ENCODE measurements at regions of chr6 and their contacts with region 1.

Region 1: GRCh38 chr6:26204332-26205165 is 117.3 kb downstream of the HFE start:
- DNase-seq: peak; percentile 99
- H3K4me3 ChIP-seq: peak overlapping the region; percentile 37 to 93 (median 86)
- H3K27ac ChIP-seq: peak overlapping the region; percentile 96
- H3K4me1 ChIP-seq: peaks cover 28% of the 10 kb centered on the region
- H3K27me3 ChIP-seq: no peaks in the 10 kb centered on the region
- CTCF ChIP-seq: peak; percentile 18 to 31
- POLR2A ChIP-seq: peak; percentile 99

Region 2: DNA sequence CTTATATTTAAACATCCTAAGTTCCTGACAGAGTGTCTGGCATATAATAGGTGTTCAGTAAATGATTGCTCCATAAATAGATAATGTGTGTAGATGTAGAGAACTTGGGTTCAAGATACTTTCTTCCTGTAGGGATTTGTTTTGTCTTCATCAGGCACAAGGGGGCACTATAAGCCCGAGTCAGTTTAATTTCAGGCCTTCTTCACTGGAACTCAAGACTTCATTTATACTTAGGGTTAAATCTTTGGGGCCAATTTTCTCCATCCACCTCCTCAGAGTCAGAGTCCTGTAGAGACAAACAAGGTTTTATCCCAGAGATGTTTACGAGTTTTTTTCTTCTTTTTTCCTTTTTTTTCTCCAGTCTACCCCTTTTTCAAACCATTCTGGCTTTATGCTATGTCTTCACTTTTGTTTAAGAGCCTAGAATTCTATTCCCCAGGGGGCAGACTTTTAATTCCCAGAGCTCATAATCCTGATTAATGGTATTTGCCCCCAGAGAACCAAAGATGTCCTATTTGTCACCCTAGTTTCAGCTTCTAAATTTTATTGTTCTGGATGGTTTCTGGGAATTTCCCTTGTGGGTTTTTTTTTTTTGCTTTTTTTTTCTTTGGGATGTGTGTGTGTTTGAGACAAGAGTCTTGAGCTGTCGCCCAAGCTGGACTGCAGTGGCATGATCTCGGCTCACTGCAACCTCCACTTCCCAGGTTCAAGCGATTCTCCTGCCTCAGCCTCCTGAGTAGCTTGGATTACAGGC is 28.9 kb before region 1 on chr6:
- CTCF ChIA-PET with region 1: interaction called, 5 read pairs
- POLR2A ChIA-PET with region 1: interaction called, 9 read pairs
- dilution Hi-C with region 1: no loop called
- intact Hi-C with region 1: loop called (anchors 1 kb)
- DNase-seq: peak; percentile 85
- H3K4me3 ChIP-seq: no peak overlapping the region
- H3K27ac ChIP-seq: no peak overlapping the region
- H3K4me1 ChIP-seq: peaks cover 11% of the 10 kb centered on the region
- H3K27me3 ChIP-seq: no peaks in the 10 kb centered on the region
- CTCF ChIP-seq: peak; percentile 46 to 51
- POLR2A ChIP-seq: no peak

Region 3: DNA sequence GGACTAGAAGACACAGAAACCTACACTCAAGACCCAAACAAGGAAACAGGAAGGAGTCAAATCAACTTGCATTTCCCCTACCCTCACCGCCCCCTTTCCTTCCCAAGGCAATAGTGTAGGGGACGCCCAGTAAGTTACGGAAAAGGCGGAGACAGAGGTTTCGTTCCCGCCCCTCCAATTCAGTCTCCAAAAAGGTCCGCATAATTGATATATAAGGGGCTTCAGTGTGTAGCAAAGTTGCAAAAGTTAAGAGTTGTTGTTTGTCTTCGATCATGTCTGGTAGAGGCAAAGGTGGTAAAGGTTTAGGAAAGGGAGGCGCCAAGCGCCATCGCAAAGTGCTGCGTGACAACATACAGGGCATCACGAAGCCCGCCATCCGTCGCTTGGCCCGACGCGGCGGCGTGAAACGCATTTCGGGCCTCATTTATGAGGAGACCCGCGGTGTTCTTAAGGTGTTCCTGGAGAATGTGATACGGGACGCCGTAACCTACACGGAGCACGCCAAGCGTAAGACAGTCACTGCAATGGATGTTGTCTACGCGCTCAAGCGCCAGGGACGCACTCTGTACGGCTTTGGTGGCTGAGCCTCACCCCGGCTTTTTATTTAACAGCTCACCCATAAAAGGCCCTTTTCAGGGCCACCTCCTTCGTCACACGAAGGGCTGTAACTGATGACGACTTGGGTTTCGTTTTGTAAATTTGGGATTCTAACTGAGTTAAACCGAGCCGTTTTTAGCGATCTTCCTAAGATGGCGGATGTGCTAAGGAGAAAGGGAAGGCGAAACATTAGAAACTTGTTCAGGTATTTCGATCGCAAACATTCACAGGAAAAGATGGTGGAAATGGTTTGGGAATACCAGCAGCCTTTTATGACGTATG is 35.8 kb after region 1 on chr6:
- CTCF ChIA-PET with region 1: no interaction called
- POLR2A ChIA-PET with region 1: no interaction called
- dilution Hi-C with region 1: no loop called
- intact Hi-C with region 1: loop called (anchors 1 kb)
- DNase-seq: peak; percentile 85
- H3K4me3 ChIP-seq: peak overlapping the region; percentile 40 to 77 (median 66)
- H3K27ac ChIP-seq: peak overlapping the region; percentile 79
- H3K4me1 ChIP-seq: peaks cover 3% of the 10 kb centered on the region
- H3K27me3 ChIP-seq: no peaks in the 10 kb centered on the region
- CTCF ChIP-seq: no peak
- POLR2A ChIP-seq: peak; percentile 98

Region 4: DNA sequence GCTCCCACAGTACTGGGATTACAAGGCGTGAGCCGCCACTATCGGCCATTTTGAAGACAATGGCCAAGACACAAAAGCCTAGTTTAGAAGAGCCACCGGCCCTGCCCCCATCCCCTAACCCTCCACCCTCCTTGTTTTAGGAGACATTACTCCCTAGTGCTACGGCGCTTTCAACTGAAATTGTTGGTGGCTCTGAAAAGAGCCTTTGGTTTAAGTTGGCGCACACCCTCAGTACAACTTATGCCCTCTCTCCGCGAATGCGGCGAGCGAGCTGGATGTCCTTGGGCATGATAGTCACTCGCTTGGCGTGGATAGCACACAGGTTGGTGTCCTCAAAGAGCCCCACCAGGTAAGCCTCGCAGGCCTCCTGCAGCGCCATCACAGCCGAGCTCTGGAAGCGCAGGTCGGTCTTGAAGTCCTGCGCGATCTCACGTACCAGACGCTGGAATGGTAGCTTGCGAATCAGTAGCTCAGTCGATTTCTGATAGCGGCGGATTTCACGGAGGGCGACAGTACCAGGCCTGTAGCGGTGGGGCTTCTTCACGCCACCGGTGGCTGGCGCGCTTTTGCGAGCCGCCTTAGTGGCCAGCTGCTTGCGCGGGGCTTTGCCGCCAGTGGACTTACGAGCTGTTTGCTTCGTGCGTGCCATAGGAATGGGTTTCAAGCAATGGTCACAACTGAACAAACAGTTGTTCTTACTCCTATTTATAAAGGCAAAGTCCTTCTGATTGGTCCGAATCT is 45.6 kb after region 1 on chr6:
- CTCF ChIA-PET with region 1: no interaction called
- POLR2A ChIA-PET with region 1: interaction called, 9 read pairs
- dilution Hi-C with region 1: no loop called
- intact Hi-C with region 1: loop called (anchors 1 kb)
- DNase-seq: peak; percentile 87
- H3K4me3 ChIP-seq: peak overlapping the region; percentile 27 to 85 (median 49)
- H3K27ac ChIP-seq: peak overlapping the region; percentile 67
- H3K4me1 ChIP-seq: peaks cover 3% of the 10 kb centered on the region
- H3K27me3 ChIP-seq: no peaks in the 10 kb centered on the region
- CTCF ChIP-seq: peak; percentile 28 to 52
- POLR2A ChIP-seq: peak; percentile 87

Region 5: DNA sequence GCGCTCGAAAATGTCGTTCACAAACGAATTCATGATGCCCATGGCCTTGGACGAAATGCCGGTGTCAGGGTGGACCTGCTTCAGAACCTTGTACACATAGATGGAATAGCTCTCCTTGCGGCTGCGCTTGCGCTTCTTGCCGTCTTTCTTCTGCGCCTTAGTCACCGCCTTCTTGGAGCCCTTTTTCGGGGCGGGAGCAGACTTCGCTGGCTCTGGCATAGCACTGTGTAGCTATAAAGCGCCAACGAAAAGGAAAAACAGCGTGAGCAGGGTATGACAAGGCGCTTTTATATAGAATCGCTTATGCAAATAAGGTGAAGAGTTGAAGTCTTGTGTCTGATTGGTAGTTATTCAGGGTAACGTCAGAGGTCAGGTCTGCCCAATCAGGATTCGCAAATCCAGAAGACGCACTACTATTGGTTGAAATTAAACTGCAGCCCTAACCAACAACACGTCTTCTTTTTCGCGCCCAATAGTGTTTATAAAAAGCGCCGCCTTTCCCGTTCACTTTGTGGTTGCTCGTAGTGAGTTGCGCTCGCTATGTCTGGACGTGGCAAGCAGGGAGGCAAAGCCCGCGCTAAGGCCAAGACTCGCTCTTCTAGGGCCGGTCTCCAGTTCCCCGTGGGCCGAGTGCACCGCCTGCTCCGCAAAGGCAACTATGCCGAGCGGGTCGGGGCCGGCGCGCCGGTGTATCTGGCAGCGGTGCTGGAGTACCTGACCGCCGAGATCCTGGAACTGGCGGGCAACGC is 928.2 kb after region 1 on chr6:
- CTCF ChIA-PET with region 1: no interaction called
- POLR2A ChIA-PET with region 1: no interaction called
- dilution Hi-C with region 1: no loop called
- intact Hi-C with region 1: loop called (anchors 2 kb)
- DNase-seq: peak; percentile 100
- H3K4me3 ChIP-seq: peak overlapping the region; percentile 37 to 81 (median 59)
- H3K27ac ChIP-seq: peak overlapping the region; percentile 86
- H3K4me1 ChIP-seq: peaks cover 19% of the 10 kb centered on the region
- H3K27me3 ChIP-seq: no peaks in the 10 kb centered on the region
- CTCF ChIP-seq: no peak
- POLR2A ChIP-seq: peak; percentile 76